ENCODE measurements at regions of chr17 and their contacts with region 1.

Region 1: GRCh38 chr17:83099570-83100231 is 20.3 kb downstream of the METRNL start:
- DNase-seq: no peak
- ATAC-seq: peak; percentile 43
- H3K4me3 Mint-ChIP-seq: peak overlapping the region; percentile 68
- H3K27ac Mint-ChIP-seq: no peak overlapping the region
- H3K4me1 Mint-ChIP-seq: peaks cover 30% of the 10 kb centered on the region
- H3K27me3 Mint-ChIP-seq: peaks cover 5% of the 10 kb centered on the region
- CTCF ChIP-seq: no peak

Region 2: DNA sequence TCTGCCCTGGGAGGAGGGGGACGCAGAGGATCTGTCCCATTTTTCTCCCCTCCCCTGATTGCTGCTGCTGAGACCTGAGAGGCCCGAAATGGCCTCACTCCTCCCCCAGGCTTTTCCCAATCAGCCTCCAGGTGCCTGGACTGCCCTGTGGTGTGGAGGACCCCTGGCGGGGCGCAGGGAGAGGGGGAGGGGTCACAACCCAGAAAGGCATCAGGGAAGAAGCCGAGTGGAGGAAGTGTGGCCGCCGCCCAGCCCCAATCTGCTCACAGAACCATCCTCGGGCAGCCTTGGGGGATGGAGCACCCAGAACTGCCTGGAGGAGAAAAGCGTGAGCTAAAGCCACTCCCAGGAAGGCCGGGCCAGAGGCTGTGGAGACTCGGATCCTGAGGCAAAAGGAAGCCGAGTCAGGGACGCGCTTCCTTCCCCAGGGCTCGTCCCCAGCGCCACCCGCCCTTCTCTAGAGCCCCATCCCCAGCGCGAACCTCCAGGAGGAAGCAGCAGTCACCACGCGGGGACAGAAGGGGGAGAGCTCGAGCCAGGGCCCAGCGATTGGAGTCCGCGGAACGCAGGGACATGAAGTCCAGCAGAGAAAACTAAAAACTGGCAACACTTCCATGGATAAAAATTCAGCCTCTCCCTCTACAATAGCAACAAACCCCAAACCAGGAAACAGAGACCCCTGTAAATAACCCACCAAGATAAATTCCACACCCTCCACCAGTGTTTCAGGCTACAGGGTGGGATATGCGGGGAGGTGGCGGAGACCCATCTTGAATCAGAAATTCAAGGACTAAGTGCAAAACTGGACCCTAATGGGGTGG is 136.6 kb before region 1 on chr17:
- CTCF ChIA-PET with region 1: no interaction called
- POLR2A ChIA-PET with region 1: no interaction called
- intact Hi-C with region 1: no loop called
- DNase-seq: peak; percentile 15
- ATAC-seq: peak; percentile 74
- H3K4me3 Mint-ChIP-seq: no peak overlapping the region
- H3K27ac Mint-ChIP-seq: no peak overlapping the region
- H3K4me1 Mint-ChIP-seq: peaks cover 23% of the 10 kb centered on the region
- H3K27me3 Mint-ChIP-seq: no peaks in the 10 kb centered on the region
- CTCF ChIP-seq: no peak

Region 3: DNA sequence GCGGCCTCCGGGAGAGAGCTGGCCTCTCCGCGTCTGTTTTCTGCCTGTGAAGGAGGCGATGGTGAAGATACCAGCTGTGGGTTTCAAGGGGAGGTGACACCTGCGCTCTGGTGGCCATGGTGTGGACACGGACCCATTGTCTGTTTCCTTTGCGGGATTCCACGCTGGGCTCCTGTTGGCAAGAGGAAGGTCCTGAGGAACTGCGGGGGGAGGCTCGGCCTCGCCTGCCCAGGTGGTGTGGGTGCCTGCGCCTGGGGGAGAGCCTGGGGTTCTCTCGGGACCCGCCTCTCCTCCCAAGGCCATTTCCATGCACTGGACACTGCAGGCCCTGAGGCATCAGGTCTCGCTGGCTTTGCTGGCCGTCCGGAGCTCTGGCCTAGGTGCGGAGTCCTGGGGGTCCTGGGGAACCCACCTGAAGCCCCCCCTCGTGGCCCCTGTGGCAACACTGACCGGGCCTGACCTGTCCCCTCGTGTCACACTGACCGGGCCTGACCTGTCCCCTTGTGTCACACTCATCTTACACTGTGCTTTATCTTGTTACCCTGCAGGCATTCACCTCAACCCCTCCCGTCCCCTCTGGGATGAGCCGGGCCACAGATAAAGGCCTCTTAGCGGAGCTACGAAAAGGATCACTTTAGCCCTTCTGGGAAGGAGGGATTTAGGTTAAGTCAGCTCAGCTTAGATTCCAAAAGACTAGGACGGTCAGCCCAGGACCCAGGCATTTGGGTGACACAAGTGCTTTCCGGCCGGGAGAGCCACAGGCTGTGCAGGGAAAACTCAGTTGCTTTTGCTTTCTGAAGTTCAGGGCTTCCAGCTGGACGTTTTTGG is 32.3 kb before region 1 on chr17:
- CTCF ChIA-PET with region 1: no interaction called
- POLR2A ChIA-PET with region 1: no interaction called
- intact Hi-C with region 1: no loop called
- DNase-seq: no peak
- ATAC-seq: no peak
- H3K4me3 Mint-ChIP-seq: no peak overlapping the region
- H3K27ac Mint-ChIP-seq: no peak overlapping the region
- H3K4me1 Mint-ChIP-seq: peaks cover 12% of the 10 kb centered on the region
- H3K27me3 Mint-ChIP-seq: peaks cover 12% of the 10 kb centered on the region
- CTCF ChIP-seq: no peak

Region 4: DNA sequence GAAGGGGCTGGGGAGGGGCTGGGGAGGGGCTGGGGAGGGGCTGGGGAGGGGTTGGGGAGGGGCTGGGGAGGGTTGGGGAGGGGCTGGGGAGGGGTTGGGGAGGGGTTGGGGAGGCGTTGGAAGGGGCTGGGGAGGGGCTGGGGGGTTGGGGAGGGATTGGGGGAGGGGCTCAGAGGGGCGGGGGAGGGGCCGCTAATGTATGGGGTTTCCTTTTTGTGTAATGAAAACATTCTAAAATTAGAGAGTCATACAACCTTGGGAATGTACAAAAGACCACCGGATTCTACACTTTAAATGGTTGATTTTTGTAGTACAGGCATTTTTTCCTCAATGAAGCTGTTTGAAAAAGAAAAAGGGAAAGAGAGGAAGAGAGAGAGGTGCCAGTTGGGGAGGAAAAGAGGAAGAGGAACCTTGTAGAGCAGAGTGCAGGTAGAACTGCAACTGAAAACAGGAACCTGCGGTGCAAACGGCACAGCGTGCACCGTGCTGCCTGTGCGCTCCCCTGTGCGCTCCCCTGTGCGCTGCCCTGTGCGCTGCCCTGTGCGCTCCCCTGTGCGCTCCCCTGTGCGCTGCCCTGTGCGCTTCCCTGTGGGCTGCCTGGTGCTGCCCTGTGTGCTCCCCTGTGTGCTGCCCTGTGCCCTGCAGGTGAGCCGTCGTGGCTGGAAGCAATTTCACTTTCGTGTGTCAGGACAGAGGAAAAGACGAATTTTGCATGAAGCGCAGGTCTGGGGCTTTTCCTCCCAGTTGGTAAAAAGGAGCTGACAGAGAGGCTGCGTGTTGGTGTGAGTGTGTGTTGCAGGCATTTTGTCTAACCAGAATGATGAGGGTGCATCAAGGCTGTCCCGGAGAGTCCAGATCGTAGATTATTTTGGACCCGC is 20.5 kb after region 1 on chr17:
- CTCF ChIA-PET with region 1: no interaction called
- POLR2A ChIA-PET with region 1: no interaction called
- intact Hi-C with region 1: loop called (anchors 2 kb)
- DNase-seq: peak; percentile 55
- ATAC-seq: peak; percentile 100
- H3K4me3 Mint-ChIP-seq: peak overlapping the region; percentile 52
- H3K27ac Mint-ChIP-seq: peak overlapping the region; percentile 59
- H3K4me1 Mint-ChIP-seq: peaks cover 35% of the 10 kb centered on the region
- H3K27me3 Mint-ChIP-seq: peaks cover 18% of the 10 kb centered on the region
- CTCF ChIP-seq: no peak

Measured in activated B cell treated with CpG ODN at 0.5 μM for 24 hours (primary cell).